Caco-2 (cell line): ENCODE measurements at regions of chr4 and their contacts with region 1.

Region 1: GRCh38 chr4:154329268-154329868 is 162.2 kb downstream of the DCHS2 start:
- DNase-seq: peak in 1 of 2 experiments; percentile 4
- H3K4me3 ChIP-seq: no peak overlapping the region
- H3K4me3 Mint-ChIP-seq: no peak overlapping the region
- H3K27ac Mint-ChIP-seq: no peak overlapping the region
- H3K4me1 ChIP-seq: no peaks in the 10 kb centered on the region
- H3K4me1 Mint-ChIP-seq: no peaks in the 10 kb centered on the region
- H3K27me3 ChIP-seq: no peaks in the 10 kb centered on the region
- H3K27me3 Mint-ChIP-seq: no peaks in the 10 kb centered on the region
- CTCF ChIP-seq: peak; percentile 18 to 34

Region 2: GRCh38 chr4:154349829-154350228 is 20.5 kb after region 1 on chr4:
- CTCF ChIA-PET with region 1: interaction called, 3 read pairs
- POLR2A ChIA-PET with region 1: no interaction called
- intact Hi-C with region 1: loop called (anchors 1 kb)
- DNase-seq: peak in 1 of 2 experiments; percentile 12
- H3K4me3 ChIP-seq: no peak overlapping the region
- H3K4me3 Mint-ChIP-seq: no peak overlapping the region
- H3K27ac Mint-ChIP-seq: no peak overlapping the region
- H3K4me1 ChIP-seq: no peaks in the 10 kb centered on the region
- H3K4me1 Mint-ChIP-seq: no peaks in the 10 kb centered on the region
- H3K27me3 ChIP-seq: no peaks in the 10 kb centered on the region
- H3K27me3 Mint-ChIP-seq: peaks cover 2% of the 10 kb centered on the region
- CTCF ChIP-seq: peak in 1 of 2 experiments; percentile 60

Region 3: DNA sequence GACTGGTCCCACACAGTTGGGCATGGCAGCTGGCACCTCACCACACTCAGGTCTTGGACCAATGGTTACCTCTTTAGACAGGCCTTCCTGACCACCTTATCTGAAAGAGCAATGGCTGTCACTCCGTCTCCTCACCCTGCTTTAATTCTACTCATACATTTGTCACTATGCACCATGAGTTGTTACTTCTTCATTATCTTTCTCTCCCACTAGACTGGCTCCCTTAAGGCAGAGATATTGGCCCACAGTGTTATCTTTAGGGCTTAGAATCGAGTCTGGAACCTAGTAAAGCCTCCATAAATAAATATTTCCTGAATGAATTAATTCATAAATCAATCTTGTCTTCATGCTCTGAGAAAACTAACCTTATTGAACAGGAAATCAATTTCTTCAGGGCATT is 115.6 kb after region 1 on chr4:
- CTCF ChIA-PET with region 1: no interaction called
- POLR2A ChIA-PET with region 1: no interaction called
- intact Hi-C with region 1: no loop called
- DNase-seq: no peak
- H3K4me3 ChIP-seq: no peak overlapping the region
- H3K4me3 Mint-ChIP-seq: no peak overlapping the region
- H3K27ac Mint-ChIP-seq: no peak overlapping the region
- H3K4me1 ChIP-seq: no peaks in the 10 kb centered on the region
- H3K4me1 Mint-ChIP-seq: no peaks in the 10 kb centered on the region
- H3K27me3 ChIP-seq: no peaks in the 10 kb centered on the region
- H3K27me3 Mint-ChIP-seq: peaks cover 9% of the 10 kb centered on the region
- CTCF ChIP-seq: no peak